Heart right ventricle (tissue), 16 donors: ENCODE measurements at regions of chr22 and their contacts with region 1.

Region 1: GRCh38 chr22:27480487-27480886 is 321.1 kb downstream of the MN1 start:
- DNase-seq: no peak
- ATAC-seq: no peak
- H3K4me3 ChIP-seq: no peak overlapping the region
- H3K27ac ChIP-seq: no peak overlapping the region
- H3K4me1 ChIP-seq: peaks cover 0 to under 1% (median 0%) of the 10 kb centered on the region in 9 donors
- H3K27me3 ChIP-seq: peaks cover 0 to 65% (median 36%) of the 10 kb centered on the region in 7 donors
- CTCF ChIP-seq: no peak

Region 2: GRCh38 chr22:27063406-27063805 is 417.1 kb before region 1 on chr22:
- intact Hi-C with region 1: loop called in 1 of 10 experiments (anchors 5 kb)
- DNase-seq: no peak
- ATAC-seq: no peak
- H3K4me3 ChIP-seq: no peak overlapping the region
- H3K27ac ChIP-seq: no peak overlapping the region
- H3K4me1 ChIP-seq: no peaks in the 10 kb centered on the region
- H3K27me3 ChIP-seq: peaks cover 0 to 72% (median 36%) of the 10 kb centered on the region in 7 donors
- CTCF ChIP-seq: no peak

Region 3: DNA sequence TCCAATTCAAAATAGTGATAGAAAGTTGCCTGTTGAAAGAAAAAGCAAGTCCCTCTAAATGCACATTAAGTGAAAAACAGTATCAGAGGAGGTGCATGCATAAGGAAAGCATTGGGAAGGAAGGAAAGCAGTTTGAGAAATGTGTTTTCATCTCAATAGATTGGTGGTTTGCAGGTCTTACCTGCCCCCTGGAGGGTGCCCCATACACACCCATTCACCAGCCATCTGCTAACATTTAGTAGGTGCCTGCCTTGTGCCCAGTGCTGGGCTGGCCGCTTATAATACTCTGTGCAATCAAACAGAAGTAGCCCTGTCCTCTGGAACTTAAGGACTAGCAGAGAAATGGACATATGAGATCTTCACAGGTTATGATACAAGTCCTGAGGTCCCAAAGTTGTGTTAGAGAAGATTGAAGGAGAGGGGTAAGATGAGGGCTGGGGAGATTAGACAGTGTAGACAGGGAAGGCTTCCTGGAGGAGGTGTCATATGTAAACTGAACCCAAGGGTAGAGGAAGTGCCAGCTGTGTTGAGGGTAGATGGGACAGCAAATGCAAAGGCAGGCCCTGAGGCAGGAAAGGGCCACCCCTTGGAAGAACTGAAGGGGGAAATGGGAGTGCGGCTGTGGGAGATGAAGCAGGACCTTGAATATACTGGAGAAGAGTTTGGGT is 136.9 kb after region 1 on chr22:
- intact Hi-C with region 1: no loop called
- DNase-seq: no peak
- ATAC-seq: no peak
- H3K4me3 ChIP-seq: no peak overlapping the region
- H3K27ac ChIP-seq: no peak overlapping the region
- H3K4me1 ChIP-seq: peaks cover 0 to 8% (median 6%) of the 10 kb centered on the region in 9 donors
- H3K27me3 ChIP-seq: peaks cover 4 to 34% (median 29%) of the 10 kb centered on the region in 7 donors
- CTCF ChIP-seq: no peak